ENCODE measurements at regions of chr1 and their contacts with region 1.

Region 1: DNA sequence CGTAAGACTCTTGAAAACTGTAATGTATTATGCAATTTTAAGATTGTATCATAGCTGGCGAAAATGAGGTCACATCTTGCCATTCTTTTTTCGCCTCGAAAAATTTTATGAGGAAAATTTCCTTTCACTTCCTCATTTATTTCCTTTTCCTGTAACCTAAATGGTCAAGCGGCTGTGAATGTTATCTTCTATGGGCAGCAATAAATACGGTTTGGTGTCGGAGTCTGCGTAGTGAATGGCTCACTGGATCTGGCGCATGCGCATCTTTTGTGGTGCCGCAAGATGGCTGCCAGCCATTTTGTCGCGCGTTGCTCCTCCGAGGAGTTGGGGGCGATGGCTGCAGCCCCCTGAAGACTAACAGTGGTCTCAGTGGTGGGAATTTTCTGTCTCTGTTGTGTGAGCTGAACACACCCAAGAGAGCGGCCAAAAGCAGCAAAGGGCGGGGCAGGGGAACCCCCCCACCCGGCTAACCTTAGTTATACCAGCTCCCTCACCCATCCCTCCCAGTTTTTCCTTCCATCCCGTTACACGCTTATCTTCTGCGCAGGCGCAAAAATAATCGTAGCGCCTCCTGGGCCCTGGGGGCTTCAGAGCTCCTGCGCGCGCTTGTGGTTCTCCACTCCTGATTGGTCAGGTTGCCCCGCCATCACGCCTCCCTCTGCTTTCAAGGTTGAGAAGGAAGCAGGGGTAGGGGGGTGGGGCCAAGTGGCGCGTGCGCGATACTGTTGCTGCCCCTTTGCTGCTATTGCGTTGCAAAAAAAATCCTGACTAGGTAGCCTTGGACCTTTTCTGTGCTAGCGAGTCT is at the start of gene RPRD2:
- DNase-seq: peak; percentile 100
- ATAC-seq: peak; percentile 91 to 93
- H3K4me3 ChIP-seq: peak within 1 kb of the TSS; percentile 82 to 93 (median 84)
- H3K27ac ChIP-seq: peak within 1 kb of the TSS; percentile 93 to 97 (median 96)
- H3K4me1 ChIP-seq: peaks cover 23% of the 10 kb centered on the region in 2 donors
- H3K27me3 ChIP-seq: no peaks in the 10 kb centered on the region
- CTCF ChIP-seq: peak in 1 of 5 experiments; percentile 14
- POLR2A ChIP-seq: peak; percentile 51 to 56
- total RNA-seq, gene RPRD2: 18.0 to 28.0 (median 23.1) TPM

Region 2: DNA sequence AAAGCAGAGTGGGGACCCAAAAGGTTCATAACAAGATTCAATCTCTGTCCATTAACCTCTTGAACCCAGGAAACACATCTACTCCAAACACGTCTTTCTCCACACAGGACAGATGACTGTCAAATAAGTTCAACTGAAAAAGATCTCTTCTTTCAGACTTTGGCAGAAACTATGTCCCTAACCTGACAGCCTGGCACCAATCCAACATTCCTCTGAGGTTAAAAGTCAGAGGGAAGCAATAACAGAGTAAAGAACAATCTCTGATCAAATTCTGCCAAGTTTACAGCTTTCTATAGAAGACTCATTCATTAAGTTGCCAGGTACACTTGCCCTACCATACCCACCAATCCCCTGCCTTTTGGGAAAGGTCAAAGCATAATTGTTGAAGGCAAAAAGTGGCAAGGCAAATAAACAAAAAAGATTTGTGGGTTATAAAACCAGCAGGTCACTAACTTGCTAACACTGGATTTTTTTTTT is 385.0 kb before region 1 on chr1:
- in situ Hi-C with region 1: no loop called
- intact Hi-C with region 1: no loop called
- DNase-seq: no peak
- ATAC-seq: peak in 1 of 2 donors; percentile 18
- H3K4me3 ChIP-seq: no peak overlapping the region
- H3K27ac ChIP-seq: peak overlapping the region; percentile 64 to 77 (median 69)
- H3K4me1 ChIP-seq: peaks cover 42 to 50% of the 10 kb centered on the region in 2 donors
- H3K27me3 ChIP-seq: no peaks in the 10 kb centered on the region
- CTCF ChIP-seq: no peak
- POLR2A ChIP-seq: no peak

Region 3: DNA sequence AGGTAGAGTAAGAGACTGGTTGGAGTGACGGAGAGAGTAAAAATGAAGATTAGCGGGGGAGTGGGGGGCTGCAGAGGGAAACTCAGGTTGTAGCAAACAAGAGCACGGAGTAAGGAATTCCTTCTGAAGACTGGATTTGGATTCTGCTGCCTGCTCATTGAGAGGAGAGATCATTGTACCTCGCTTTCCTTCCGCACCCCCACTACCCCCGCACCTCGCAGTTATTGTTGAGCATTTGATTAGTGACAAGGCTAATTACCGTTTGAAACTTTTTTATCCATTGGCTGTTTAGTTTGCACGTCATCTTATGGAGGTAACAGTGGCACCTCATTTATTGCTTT is 41.8 kb before region 1 on chr1:
- in situ Hi-C with region 1: no loop called
- intact Hi-C with region 1: loop called (anchors 1 kb)
- DNase-seq: no peak
- ATAC-seq: no peak
- H3K4me3 ChIP-seq: peak overlapping the region; percentile 58 to 98 (median 74)
- H3K27ac ChIP-seq: peak overlapping the region; percentile 82 to 88 (median 87)
- H3K4me1 ChIP-seq: peaks cover 9 to 10% of the 10 kb centered on the region in 2 donors
- H3K27me3 ChIP-seq: no peaks in the 10 kb centered on the region
- CTCF ChIP-seq: no peak
- POLR2A ChIP-seq: no peak

Region 4: DNA sequence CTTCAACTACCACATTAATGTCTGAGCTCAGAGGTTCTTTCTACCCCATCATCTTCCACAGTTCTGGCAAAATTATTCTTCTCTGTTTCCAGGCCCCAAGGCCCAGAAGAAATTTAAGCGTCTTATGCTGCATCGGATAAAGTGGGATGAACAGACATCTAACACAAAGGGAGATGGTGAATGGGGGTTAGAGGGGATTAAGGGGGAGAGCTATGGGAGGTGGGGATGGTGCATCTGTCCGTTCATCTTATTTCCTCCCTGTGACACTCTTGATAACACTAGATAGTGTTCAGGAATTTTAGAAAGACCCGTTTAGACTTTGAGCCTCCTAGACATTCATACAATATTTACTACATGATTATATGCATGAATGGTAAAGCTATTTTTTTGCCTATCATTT is 17.3 kb before region 1 on chr1:
- in situ Hi-C with region 1: no loop called
- intact Hi-C with region 1: no loop called
- DNase-seq: no peak
- ATAC-seq: no peak
- H3K4me3 ChIP-seq: no peak overlapping the region
- H3K27ac ChIP-seq: no peak overlapping the region
- H3K4me1 ChIP-seq: no peaks in the 10 kb centered on the region
- H3K27me3 ChIP-seq: no peaks in the 10 kb centered on the region
- CTCF ChIP-seq: no peak
- POLR2A ChIP-seq: no peak

Region 5: GRCh38 chr1:150410582-150411101 is 47.0 kb after region 1 on chr1:
- in situ Hi-C with region 1: no loop called
- intact Hi-C with region 1: no loop called
- DNase-seq: no peak
- ATAC-seq: no peak
- H3K4me3 ChIP-seq: no peak overlapping the region
- H3K27ac ChIP-seq: no peak overlapping the region
- H3K4me1 ChIP-seq: peaks cover 6 to 16% of the 10 kb centered on the region in 2 donors
- H3K27me3 ChIP-seq: no peaks in the 10 kb centered on the region
- CTCF ChIP-seq: no peak
- POLR2A ChIP-seq: no peak

Region 6: DNA sequence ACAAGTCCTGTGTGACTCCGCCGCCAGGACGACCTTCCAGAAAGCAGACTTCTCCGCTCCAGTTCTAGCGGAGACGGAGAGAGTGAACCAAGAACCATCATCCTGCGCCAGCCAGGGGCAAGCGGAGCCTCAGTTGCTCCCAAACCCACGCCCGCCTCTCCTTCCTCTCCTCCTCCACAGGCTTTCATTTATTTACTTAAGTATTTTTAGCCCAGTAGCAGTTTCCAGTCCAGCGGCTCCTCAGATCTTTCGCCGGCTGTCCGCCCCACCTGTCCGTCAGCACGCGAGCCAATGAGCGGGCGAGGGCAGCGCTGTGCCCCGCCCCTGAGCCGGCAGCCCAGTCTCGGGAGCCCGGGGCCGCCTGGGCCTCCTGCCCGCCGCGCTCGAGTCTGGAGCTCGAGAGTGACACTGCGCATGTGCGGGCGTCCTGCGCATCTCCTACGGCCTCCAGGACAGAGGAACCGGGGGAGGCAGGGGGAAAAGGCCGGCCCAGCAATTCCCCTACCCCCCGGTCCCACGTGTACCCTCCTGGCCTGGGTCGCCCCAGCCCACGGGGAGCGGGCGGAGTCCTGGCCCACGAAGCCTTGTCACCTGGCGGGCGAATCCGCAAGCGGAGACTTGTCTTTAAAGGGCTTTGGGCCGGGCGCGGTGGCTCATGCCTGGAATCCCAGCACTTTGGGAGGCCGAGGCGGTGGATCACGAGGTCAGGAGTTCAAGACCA is 151.9 kb after region 1 on chr1 and contains the start of gene FALEC:
- in situ Hi-C with region 1: no loop called
- intact Hi-C with region 1: loop called (anchors 10 kb)
- DNase-seq: peak; percentile 95 to 98
- ATAC-seq: peak; percentile 92 to 95
- H3K4me3 ChIP-seq: peak within 1 kb of the TSS; percentile 56 to 79 (median 67)
- H3K27ac ChIP-seq: peak within 1 kb of the TSS; percentile 87 to 94 (median 92)
- H3K4me1 ChIP-seq: peaks cover 6 to 14% of the 10 kb centered on the region in 2 donors
- H3K27me3 ChIP-seq: no peaks in the 10 kb centered on the region
- CTCF ChIP-seq: no peak
- POLR2A ChIP-seq: peak; percentile 35 to 86
- total RNA-seq, gene FALEC: not detected

Region 7: GRCh38 chr1:150613061-150613920 is 249.7 kb after region 1 on chr1:
- in situ Hi-C with region 1: no loop called
- intact Hi-C with region 1: loop called (anchors 10 kb)
- DNase-seq: no peak
- ATAC-seq: peak; percentile 70 to 75
- H3K4me3 ChIP-seq: no peak overlapping the region
- H3K27ac ChIP-seq: peak overlapping the region; percentile 67 to 81 (median 76)
- H3K4me1 ChIP-seq: peaks cover 14 to 28% of the 10 kb centered on the region in 2 donors
- H3K27me3 ChIP-seq: no peaks in the 10 kb centered on the region
- CTCF ChIP-seq: no peak
- POLR2A ChIP-seq: peak in 1 of 2 donors; percentile 37

Measured in gastrocnemius medialis (tissue), 4 donors.